ENCODE measurements at regions of chr17 and their contacts with region 1.

Region 1: GRCh38 chr17:7745748-7746470 is 28.4 kb downstream of the DNAH2 start:
- DNase-seq: no peak
- ATAC-seq: peak in 1 of 8 donors; percentile 37
- H3K4me3 ChIP-seq: no peak overlapping the region
- H3K27ac ChIP-seq: no peak overlapping the region
- H3K4me1 ChIP-seq: peaks cover 0 to 18% (median 8%) of the 10 kb centered on the region in 9 donors
- H3K27me3 ChIP-seq: peaks cover 0 to 18% (median 9%) of the 10 kb centered on the region in 7 donors
- CTCF ChIP-seq: peak in 1 of 9 donors; percentile 8

Region 2: DNA sequence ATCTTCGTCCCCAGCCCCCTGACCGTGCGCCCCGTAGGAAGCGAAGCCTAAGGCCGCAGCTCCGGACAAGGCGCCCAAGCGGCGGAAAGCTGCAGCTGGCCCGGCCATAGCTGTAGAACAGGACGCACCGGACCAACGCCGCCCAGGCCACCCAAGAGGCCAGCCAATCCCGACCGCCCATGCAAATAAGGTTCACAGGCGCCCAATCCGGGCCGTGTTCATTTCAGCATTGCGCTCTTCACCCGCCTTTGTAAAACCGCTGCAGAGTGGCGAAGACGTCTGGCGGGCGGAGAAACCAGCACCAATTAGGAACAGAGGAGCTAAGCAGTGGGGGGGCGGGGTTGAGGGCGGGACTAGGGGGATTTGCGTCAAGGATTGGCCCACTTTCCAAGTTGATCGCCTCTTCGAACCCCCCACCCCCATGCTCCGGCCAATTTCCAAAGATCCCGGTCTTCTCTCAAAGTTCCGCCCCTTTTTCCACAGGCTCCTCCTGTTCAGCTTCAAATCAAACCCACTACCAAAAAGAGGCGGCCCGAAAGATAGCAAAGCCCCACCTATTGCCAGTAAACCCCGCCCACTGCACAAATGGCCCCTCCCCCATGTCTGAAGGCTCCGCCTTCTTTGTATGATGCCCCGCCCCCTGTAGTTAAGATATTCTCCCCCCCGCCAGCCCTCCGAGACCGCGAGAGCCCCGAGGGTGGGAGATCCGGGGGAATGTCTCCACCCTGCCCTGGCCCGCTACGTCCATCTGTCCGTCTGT is 341.8 kb before region 1 on chr17 and contains the start of gene TMEM256:
- intact Hi-C with region 1: no loop called
- DNase-seq: peak; percentile 97 to 99
- ATAC-seq: peak; percentile 91 to 97 (median 96)
- H3K4me3 ChIP-seq: peak within 1 kb of the TSS; percentile 54 to 87 (median 68)
- H3K27ac ChIP-seq: peak within 1 kb of the TSS; percentile 80 to 96 (median 88)
- H3K4me1 ChIP-seq: peaks cover 13 to 28% (median 19%) of the 10 kb centered on the region in 9 donors
- H3K27me3 ChIP-seq: peaks cover 0 to 17% (median 0%) of the 10 kb centered on the region in 7 donors
- CTCF ChIP-seq: peak in 2 of 9 donors; percentile 8 to 13
- total RNA-seq, gene TMEM256: 61.8 to 83.2 (median 74.2) TPM

Region 3: GRCh38 chr17:7818746-7819645 is 73.1 kb after region 1 on chr17:
- intact Hi-C with region 1: loop called in 4 of 10 experiments (anchors 5 to 10 kb)
- DNase-seq: no peak
- ATAC-seq: peak in 1 of 8 donors; percentile 26
- H3K4me3 ChIP-seq: no peak overlapping the region
- H3K27ac ChIP-seq: no peak overlapping the region
- H3K4me1 ChIP-seq: no peaks in the 10 kb centered on the region
- H3K27me3 ChIP-seq: peaks cover 0 to 14% (median 0%) of the 10 kb centered on the region in 7 donors
- CTCF ChIP-seq: no peak

Region 4: GRCh38 chr17:7897773-7898172 is 151.9 kb after region 1 on chr17:
- intact Hi-C with region 1: loop called in 1 of 10 experiments (anchors 10 kb)
- DNase-seq: no peak
- ATAC-seq: peak in 7 of 8 donors; percentile 63 to 86 (median 74)
- H3K4me3 ChIP-seq: no peak overlapping the region
- H3K27ac ChIP-seq: peak overlapping the region in 1 of 10 donors; percentile 1
- H3K4me1 ChIP-seq: peaks cover 0 to 9% (median 0%) of the 10 kb centered on the region in 9 donors
- H3K27me3 ChIP-seq: no peaks in the 10 kb centered on the region
- CTCF ChIP-seq: peak; percentile 20 to 63 (median 52)

Region 5: DNA sequence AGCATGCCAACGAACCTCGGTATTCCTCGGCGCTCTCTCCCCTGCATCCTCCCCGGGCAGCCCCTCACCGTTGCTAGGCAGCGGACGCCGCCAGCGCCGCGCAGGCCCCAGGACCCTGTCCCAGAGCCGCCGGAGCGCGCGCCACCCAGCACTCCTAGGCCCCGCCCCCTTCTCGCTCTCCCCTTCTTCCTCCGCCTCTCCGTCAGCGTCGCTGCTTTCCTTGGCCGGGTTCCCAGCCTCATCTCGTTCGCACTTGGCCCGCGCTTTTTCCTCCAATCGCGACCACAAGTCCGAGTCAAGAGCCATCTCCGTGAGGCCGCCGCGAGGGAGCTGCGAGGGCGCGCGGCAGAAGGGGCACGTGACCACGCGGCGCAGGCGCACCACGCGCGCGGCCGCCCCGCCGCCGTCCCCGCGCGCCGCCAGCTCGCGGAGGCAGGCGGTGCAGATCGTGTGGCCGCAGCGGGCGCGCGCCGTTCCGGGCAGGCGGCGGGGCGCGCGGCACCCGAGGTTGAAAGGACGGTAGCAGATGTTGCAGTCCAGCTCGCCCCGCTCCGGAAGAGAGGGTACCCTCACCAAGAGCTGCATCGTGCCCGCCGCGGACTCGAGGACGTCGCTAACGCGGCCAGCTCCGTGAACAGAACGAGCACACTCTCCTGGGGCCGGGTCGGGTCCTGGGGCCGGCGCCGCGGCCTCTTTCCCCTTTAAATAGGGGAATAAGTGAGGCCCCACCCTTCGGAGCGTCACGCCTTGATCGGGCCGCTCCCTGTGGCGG is 169.9 kb after region 1 on chr17 and contains the start of gene RNF227:
- intact Hi-C with region 1: loop called in 1 of 10 experiments (anchors 10 kb)
- DNase-seq: peak; percentile 91 to 94
- ATAC-seq: peak; percentile 88 to 93 (median 91)
- H3K4me3 ChIP-seq: peak within 1 kb of the TSS; percentile 49 to 93 (median 65)
- H3K27ac ChIP-seq: peak within 1 kb of the TSS; percentile 70 to 98 (median 92)
- H3K4me1 ChIP-seq: peaks cover 3 to 35% (median 26%) of the 10 kb centered on the region in 9 donors
- H3K27me3 ChIP-seq: no peaks in the 10 kb centered on the region
- CTCF ChIP-seq: no peak
- total RNA-seq, gene RNF227: 0.15 to 1.6 (median 0.90) TPM

Measured in heart right ventricle (tissue), 16 donors.